PC-3 (cell line): ENCODE measurements at regions of chr16 and their contacts with region 1.

Region 1: GRCh38 chr16:30407102-30407803 is at the start of gene ZNF771:
- DNase-seq: peak; percentile 78
- ATAC-seq: peak; percentile 90
- H3K4me3 ChIP-seq: peak within 1 kb of the TSS; percentile 81
- H3K27ac ChIP-seq: 0 out of 2 replicates have a peak within 1 kb of the TSS, but pooled peaks have one; percentile 25
- H3K4me1 ChIP-seq: peaks cover 13% of the 10 kb centered on the region
- H3K27me3 ChIP-seq: no peaks in the 10 kb centered on the region
- CTCF ChIP-seq: no peak
- total RNA-seq, gene ZNF771: 3.6 and 4.3 TPM in 2 replicates

Region 2: GRCh38 chr16:30352814-30353401 is 54.3 kb before region 1 on chr16:
- CTCF ChIA-PET with region 1: no interaction called
- POLR2A ChIA-PET with region 1: interaction called, 19 read pairs
- intact Hi-C with region 1: no loop called
- DNase-seq: no peak
- ATAC-seq: no peak
- H3K4me3 ChIP-seq: no peak overlapping the region
- H3K27ac ChIP-seq: peak overlapping the region; percentile 83
- H3K4me1 ChIP-seq: peaks cover 33% of the 10 kb centered on the region
- H3K27me3 ChIP-seq: no peaks in the 10 kb centered on the region
- CTCF ChIP-seq: 0 out of 2 replicates have a peak, but pooled peaks have one; percentile 18

Region 3: DNA sequence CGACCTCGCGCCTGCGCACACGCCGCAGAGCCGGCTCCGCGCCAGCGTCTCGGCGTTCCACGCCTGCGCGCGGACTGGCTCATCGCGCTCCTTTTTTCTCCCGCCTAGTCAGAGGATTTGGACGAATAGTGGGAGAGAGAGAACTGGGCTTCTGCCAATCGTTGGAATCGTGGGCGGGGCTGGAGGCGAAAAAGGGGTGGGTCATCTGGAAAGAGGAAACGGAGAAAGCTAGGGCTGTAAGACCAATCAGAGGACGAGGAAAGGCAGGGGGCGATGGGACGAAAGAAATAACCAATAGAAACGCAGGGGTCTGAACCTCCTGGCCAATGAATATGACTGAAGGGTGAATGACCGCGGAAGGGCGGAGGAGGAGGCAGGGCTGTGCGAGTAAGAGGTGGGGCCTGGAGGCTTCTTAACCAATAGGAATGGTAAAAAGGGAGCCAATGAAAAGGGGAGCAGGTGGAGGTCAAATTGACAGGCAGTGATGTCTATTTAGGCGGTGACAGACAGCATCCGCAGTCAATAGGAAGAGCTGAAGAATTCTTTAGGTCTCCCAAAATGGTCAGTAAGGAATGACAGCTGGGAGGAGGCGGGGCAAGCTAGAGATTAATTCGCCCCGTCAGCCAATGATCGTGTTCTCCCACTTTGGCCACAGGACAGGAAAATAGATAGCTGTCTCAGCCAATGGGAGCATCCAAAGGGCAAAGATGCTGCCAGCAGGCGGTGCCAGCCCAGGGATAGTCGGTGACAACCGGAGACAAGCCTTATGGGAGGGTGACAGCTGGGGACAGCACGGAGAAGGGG is 36.6 kb before region 1 on chr16 and contains the start of gene TBC1D10B:
- CTCF ChIA-PET with region 1: interaction called, 8 read pairs
- POLR2A ChIA-PET with region 1: no interaction called
- intact Hi-C with region 1: loop called (anchors 5 kb)
- DNase-seq: peak; percentile 99
- ATAC-seq: peak; percentile 78
- H3K4me3 ChIP-seq: peak within 1 kb of the TSS; percentile 94
- H3K27ac ChIP-seq: no peak within 1 kb of the TSS; the same call in 1 of the 2 replicates
- H3K4me1 ChIP-seq: peaks cover 21% of the 10 kb centered on the region
- H3K27me3 ChIP-seq: no peaks in the 10 kb centered on the region
- CTCF ChIP-seq: no peak; the same call in 1 of the 2 replicates
- total RNA-seq, gene TBC1D10B: 36.0 and 52.4 TPM in 2 replicates

Region 4: GRCh38 chr16:30417529-30418349 is 10.5 kb after region 1 on chr16:
- CTCF ChIA-PET with region 1: interaction called, 8 read pairs
- POLR2A ChIA-PET with region 1: interaction called, 18 read pairs
- intact Hi-C with region 1: no loop called
- DNase-seq: peak; percentile 94
- ATAC-seq: peak; percentile 94
- H3K4me3 ChIP-seq: peak overlapping the region; percentile 68
- H3K27ac ChIP-seq: no peak overlapping the region
- H3K4me1 ChIP-seq: peaks cover 6% of the 10 kb centered on the region; the same call in 1 of the 2 replicates
- H3K27me3 ChIP-seq: no peaks in the 10 kb centered on the region
- CTCF ChIP-seq: peak; percentile 33; the same call in 1 of the 2 replicates

Region 5: GRCh38 chr16:30445408-30446202 is 38.4 kb after region 1 on chr16 and contains the start of gene SEPHS2:
- CTCF ChIA-PET with region 1: no interaction called
- POLR2A ChIA-PET with region 1: no interaction called
- intact Hi-C with region 1: no loop called
- DNase-seq: peak; percentile 95
- ATAC-seq: peak; percentile 92
- H3K4me3 ChIP-seq: peak within 1 kb of the TSS; percentile 96
- H3K27ac ChIP-seq: peak within 1 kb of the TSS; percentile 50
- H3K4me1 ChIP-seq: peaks cover 19% of the 10 kb centered on the region
- H3K27me3 ChIP-seq: no peaks in the 10 kb centered on the region
- CTCF ChIP-seq: peak; percentile 52
- total RNA-seq, gene SEPHS2: 8.4 and 16.8 TPM in 2 replicates